ENCODE measurements at regions of chr10 and their contacts with region 1.

Region 1: DNA sequence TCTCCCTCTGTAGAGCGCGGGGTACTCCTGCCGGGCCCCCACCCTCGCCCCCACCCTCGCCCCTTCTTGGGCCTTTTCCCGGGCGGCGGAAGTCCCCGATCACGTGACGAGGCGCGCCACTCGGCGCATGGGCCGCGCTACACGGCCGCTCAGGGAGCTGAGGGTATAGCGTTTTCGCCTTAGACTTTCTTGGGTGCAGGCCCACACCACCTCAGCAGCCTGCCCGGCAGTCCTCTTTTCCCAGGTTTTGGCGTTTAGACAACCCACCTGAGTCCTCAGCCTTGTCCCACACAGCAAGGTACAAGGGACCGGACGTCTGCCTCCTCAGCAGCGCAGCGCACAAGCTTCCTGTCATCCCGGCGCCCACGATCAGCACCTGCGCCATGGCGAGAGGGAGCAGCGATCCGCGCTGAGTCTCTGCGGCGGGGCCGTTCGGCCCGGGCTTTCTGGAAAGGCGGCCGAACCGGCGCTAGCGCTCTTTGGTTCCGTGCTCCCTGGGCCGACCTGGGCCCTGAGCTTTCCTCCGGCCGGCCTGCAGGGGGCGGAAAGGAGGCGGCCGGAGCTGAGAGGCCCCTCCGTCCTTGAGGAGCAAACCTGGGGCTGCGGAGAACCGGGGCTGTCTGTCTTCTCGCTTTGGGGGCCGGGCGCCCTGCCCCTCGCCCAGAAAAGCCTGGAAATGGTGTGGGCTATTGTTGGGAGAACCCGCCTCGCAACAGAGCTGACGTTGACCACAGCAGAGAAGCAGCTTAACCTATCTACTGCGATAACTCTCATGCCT is at the start of gene RNLS:
- DNase-seq: peak; percentile 80
- ATAC-seq: peak; percentile 91
- H3K4me3 Mint-ChIP-seq: peak within 1 kb of the TSS; percentile 78
- H3K27ac Mint-ChIP-seq: peak within 1 kb of the TSS; percentile 93
- H3K4me1 Mint-ChIP-seq: peaks cover 12% of the 10 kb centered on the region
- H3K27me3 Mint-ChIP-seq: no peaks in the 10 kb centered on the region
- total RNA-seq, gene RNLS: 4.3 to 4.4 TPM

Region 2: GRCh38 chr10:87642988-87643387 is 940.0 kb before region 1 on chr10:
- CTCF ChIA-PET with region 1: no interaction called
- POLR2A ChIA-PET with region 1: no interaction called
- intact Hi-C with region 1: no loop called
- DNase-seq: no peak
- ATAC-seq: no peak
- H3K4me3 Mint-ChIP-seq: no peak overlapping the region
- H3K27ac Mint-ChIP-seq: no peak overlapping the region
- H3K4me1 Mint-ChIP-seq: peaks cover 15% of the 10 kb centered on the region
- H3K27me3 Mint-ChIP-seq: no peaks in the 10 kb centered on the region

Region 3: DNA sequence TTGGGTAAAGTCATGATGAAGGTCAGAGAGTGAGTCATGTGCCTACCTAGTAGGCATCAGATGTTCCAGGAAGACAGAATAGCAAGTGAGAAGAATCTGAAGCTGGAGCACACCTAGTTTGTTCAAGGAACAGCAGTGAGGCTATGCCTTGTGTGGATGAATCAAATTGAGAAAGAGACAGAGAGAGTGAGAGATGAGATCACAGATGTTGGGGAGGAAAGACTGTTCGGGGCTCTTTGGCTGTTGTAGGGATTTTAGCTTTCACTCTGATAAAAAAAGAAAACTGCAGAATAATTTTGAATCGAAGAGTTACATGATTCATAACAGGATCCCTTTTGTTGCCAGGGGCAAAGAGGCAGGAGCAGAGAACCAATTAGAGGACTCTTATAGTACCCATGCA is 87.5 kb after region 1 on chr10:
- CTCF ChIA-PET with region 1: no interaction called
- POLR2A ChIA-PET with region 1: no interaction called
- intact Hi-C with region 1: loop called (anchors 1 to 10 kb)
- DNase-seq: peak; percentile 40
- ATAC-seq: peak; percentile 99
- H3K4me3 Mint-ChIP-seq: no peak overlapping the region
- H3K27ac Mint-ChIP-seq: peak overlapping the region; percentile 11
- H3K4me1 Mint-ChIP-seq: peaks cover 25% of the 10 kb centered on the region
- H3K27me3 Mint-ChIP-seq: peaks cover 18% of the 10 kb centered on the region

Region 4: GRCh38 chr10:88805361-88805760 is 222.4 kb after region 1 on chr10:
- CTCF ChIA-PET with region 1: no interaction called
- POLR2A ChIA-PET with region 1: no interaction called
- intact Hi-C with region 1: loop called (anchors 1 to 5 kb)
- DNase-seq: no peak
- ATAC-seq: no peak
- H3K4me3 Mint-ChIP-seq: no peak overlapping the region
- H3K27ac Mint-ChIP-seq: no peak overlapping the region
- H3K4me1 Mint-ChIP-seq: peaks cover 13% of the 10 kb centered on the region
- H3K27me3 Mint-ChIP-seq: peaks cover 6% of the 10 kb centered on the region

Region 5: GRCh38 chr10:88901206-88901983 is 318.4 kb after region 1 on chr10:
- CTCF ChIA-PET with region 1: no interaction called
- POLR2A ChIA-PET with region 1: no interaction called
- intact Hi-C with region 1: no loop called
- DNase-seq: no peak
- ATAC-seq: peak; percentile 75
- H3K4me3 Mint-ChIP-seq: peak overlapping the region; percentile 26
- H3K27ac Mint-ChIP-seq: peak overlapping the region; percentile 90
- H3K4me1 Mint-ChIP-seq: peaks cover 60% of the 10 kb centered on the region
- H3K27me3 Mint-ChIP-seq: no peaks in the 10 kb centered on the region